ENCODE measurements at regions of chr7 and their contacts with region 1.

Region 1: DNA sequence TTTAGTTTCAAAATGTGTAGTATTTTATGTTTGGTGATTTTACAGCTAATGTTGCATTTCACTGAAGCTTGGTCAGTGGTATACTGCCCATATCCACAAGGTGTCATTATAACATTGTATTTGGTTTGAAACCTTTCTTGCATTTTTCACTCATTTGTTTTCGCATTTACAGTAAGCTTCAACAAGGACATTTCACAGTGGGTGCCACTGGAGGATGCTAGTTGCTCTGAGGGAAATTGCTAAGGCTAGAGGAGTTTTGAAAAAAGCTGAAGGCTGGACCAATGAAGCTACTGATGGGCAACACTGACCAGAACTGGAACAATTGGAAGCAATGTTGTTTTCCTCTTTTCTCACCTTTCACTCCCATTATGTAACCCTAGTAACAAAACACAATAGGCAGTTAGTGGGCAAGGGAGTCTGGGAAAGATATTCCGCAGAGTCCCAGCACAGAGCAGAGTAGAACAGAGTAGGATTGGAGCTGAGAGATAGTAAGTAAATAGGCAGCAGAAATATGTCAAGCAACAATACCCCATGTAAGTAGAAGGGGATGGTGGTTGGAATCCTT is 23.6 kb upstream of the SRI start:
- DNase-seq: no peak
- ATAC-seq: no peak
- H3K4me3 Mint-ChIP-seq: no peak overlapping the region
- H3K27ac Mint-ChIP-seq: no peak overlapping the region
- H3K4me1 Mint-ChIP-seq: no peaks in the 10 kb centered on the region
- H3K27me3 Mint-ChIP-seq: peaks cover 2% of the 10 kb centered on the region
- CTCF ChIP-seq: no peak

Region 2: DNA sequence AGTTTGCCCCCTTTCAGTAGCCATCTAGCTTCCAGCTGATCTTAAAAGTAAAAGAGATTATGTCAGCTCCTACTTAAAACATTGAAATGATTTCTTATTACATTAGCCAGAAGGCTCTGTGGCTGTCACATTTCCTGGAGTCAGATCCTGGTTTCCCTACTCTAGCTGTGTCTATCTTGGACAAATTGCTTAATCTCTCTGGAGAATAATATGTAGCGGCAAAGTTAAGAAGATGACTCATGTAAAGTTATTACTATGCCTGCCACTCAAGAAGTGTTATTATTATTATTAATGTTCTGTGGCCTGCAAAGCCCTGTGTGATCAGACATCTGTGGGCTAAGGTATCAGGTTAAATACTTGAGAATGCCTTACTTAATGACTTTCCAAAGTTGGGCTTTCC is 508.1 kb before region 1 on chr7:
- CTCF ChIA-PET with region 1: no interaction called
- POLR2A ChIA-PET with region 1: no interaction called
- intact Hi-C with region 1: no loop called
- DNase-seq: no peak
- ATAC-seq: no peak
- H3K4me3 Mint-ChIP-seq: no peak overlapping the region
- H3K27ac Mint-ChIP-seq: no peak overlapping the region
- H3K4me1 Mint-ChIP-seq: no peaks in the 10 kb centered on the region
- H3K27me3 Mint-ChIP-seq: no peaks in the 10 kb centered on the region
- CTCF ChIP-seq: no peak

Region 3: GRCh38 chr7:88357781-88358525 is 114.5 kb after region 1 on chr7:
- CTCF ChIA-PET with region 1: interaction called, 5 read pairs
- POLR2A ChIA-PET with region 1: no interaction called
- intact Hi-C with region 1: loop called (anchors 2 kb)
- DNase-seq: no peak
- ATAC-seq: no peak
- H3K4me3 Mint-ChIP-seq: no peak overlapping the region
- H3K27ac Mint-ChIP-seq: no peak overlapping the region
- H3K4me1 Mint-ChIP-seq: no peaks in the 10 kb centered on the region
- H3K27me3 Mint-ChIP-seq: no peaks in the 10 kb centered on the region
- CTCF ChIP-seq: no peak

Region 4: GRCh38 chr7:89622838-89623672 is 1379.6 kb after region 1 on chr7:
- CTCF ChIA-PET with region 1: no interaction called
- POLR2A ChIA-PET with region 1: no interaction called
- intact Hi-C with region 1: loop called (anchors 5 kb)
- DNase-seq: no peak
- ATAC-seq: no peak
- H3K4me3 Mint-ChIP-seq: no peak overlapping the region
- H3K27ac Mint-ChIP-seq: no peak overlapping the region
- H3K4me1 Mint-ChIP-seq: no peaks in the 10 kb centered on the region
- H3K27me3 Mint-ChIP-seq: no peaks in the 10 kb centered on the region
- CTCF ChIP-seq: no peak

Measured in activated B cell treated with CpG ODN at 0.5 μM for 24 hours (primary cell).